Posterior cingulate gyrus (tissue), 11 donors: ENCODE measurements at regions of chr10 and their contacts with region 1.

Region 1: DNA sequence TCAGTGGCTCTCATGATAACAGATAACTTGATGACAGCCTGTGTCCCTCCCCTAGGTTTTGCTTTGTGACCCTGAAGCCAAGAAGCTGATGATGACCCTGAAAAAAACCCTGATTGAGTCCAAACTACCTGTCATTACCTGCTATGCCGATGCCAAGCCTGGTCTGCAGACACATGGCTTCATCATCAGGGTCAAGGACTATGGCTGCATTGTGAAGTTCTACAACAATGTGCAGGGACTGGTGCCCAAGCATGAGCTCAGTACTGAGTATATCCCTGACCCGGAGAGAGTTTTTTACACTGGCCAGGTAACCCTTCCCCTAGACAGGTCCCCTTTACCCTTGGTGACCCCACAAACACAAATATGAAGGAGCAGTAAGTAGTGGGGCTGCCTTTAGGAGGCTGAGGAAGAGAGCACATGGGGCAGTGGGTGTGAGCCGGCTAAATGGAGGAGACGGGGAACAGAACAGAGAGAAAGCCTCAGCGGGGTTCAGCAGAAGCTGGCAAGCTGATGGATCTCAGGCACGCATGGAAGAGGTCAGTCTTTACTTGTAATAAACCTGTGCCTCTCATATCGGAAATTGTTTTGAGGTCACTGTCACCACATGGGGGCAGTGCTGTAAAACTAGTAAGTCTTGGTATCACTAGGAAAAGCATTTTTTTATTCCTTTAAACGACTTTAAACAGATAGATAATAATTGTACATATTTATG is 20.2 kb downstream of the PDCD11 start:
- DNase-seq: peak in 5 of 10 donors; percentile 33 to 59 (median 43)

Region 2: GRCh38 chr10:102616066-102616770 is 800.4 kb before region 1 on chr10:
- intact Hi-C with region 1: no loop called
- DNase-seq: peak in 3 of 10 donors; percentile 12 to 74 (median 68)

Region 3: GRCh38 chr10:103481974-103482531 is 65.5 kb after region 1 on chr10:
- intact Hi-C with region 1: loop called (anchors 2 kb)
- DNase-seq: no peak